ENCODE measurements at regions of chr12 and their contacts with region 1.

Region 1: GRCh38 chr12:27821259-27821973 is 41.4 kb upstream of the MANSC4 start:
- DNase-seq: no peak
- H3K4me3 ChIP-seq: no peak overlapping the region
- H3K27ac ChIP-seq: no peak overlapping the region
- H3K4me1 ChIP-seq: peaks cover 0 to 17% (median 14%) of the 10 kb centered on the region in 4 donors
- H3K27me3 ChIP-seq: no peaks in the 10 kb centered on the region
- CTCF ChIP-seq: peak; percentile 56 to 83 (median 68)
- EP300 ChIP-seq: no peak
- POLR2A ChIP-seq: no peak

Region 2: GRCh38 chr12:27667540-27667939 is 153.9 kb before region 1 on chr12:
- intact Hi-C with region 1: no loop called
- DNase-seq: no peak
- H3K4me3 ChIP-seq: no peak overlapping the region
- H3K27ac ChIP-seq: no peak overlapping the region
- H3K4me1 ChIP-seq: no peaks in the 10 kb centered on the region
- H3K27me3 ChIP-seq: no peaks in the 10 kb centered on the region
- CTCF ChIP-seq: no peak
- EP300 ChIP-seq: no peak
- POLR2A ChIP-seq: no peak

Region 3: GRCh38 chr12:27733052-27733656 is 88.3 kb before region 1 on chr12:
- intact Hi-C with region 1: loop called (anchors 2 kb)
- DNase-seq: no peak
- H3K4me3 ChIP-seq: no peak overlapping the region
- H3K27ac ChIP-seq: no peak overlapping the region
- H3K4me1 ChIP-seq: no peaks in the 10 kb centered on the region
- H3K27me3 ChIP-seq: no peaks in the 10 kb centered on the region
- CTCF ChIP-seq: peak; percentile 53 to 75 (median 71)
- EP300 ChIP-seq: no peak
- POLR2A ChIP-seq: no peak

Region 4: DNA sequence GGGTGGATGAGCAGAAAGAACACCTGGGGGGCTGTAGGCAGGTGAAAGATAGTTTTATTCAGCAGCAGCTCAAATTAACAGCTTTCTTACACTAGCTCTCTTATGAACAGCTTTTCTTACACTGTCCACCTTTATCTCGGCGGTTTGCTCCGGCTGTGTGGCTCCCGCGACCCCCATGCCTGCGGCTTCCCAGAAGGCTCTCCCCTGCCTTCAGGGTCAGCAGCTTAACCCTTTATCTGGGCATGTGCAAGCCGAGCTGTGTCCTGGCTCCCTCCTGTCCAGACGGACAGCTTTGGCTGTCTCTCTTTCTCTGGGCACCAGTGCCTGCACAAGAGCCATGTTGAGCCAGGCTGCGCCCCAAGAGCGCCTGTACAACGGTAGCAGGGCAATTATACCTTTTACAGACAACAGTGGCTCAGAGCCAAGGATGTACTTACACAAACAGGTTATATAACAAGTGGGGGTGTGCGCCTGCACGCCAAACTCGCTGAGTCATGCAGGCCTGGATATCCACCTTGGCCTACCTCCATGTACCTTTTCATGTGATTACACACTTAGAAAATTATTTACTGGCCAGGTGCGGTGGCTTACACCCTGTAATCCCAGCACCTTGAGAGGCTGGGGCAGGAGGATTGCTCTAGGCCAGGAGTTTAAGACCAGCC is 69.9 kb before region 1 on chr12:
- intact Hi-C with region 1: loop called (anchors 5 kb)
- DNase-seq: no peak
- H3K4me3 ChIP-seq: no peak overlapping the region
- H3K27ac ChIP-seq: no peak overlapping the region
- H3K4me1 ChIP-seq: peaks cover 0 to 22% (median 18%) of the 10 kb centered on the region in 4 donors
- H3K27me3 ChIP-seq: no peaks in the 10 kb centered on the region
- CTCF ChIP-seq: no peak
- EP300 ChIP-seq: no peak
- POLR2A ChIP-seq: no peak

Region 5: GRCh38 chr12:27779920-27780611 is 41.4 kb before region 1 on chr12 and contains the starts of genes KLHL42 and MANSC4:
- intact Hi-C with region 1: loop called (anchors 5 kb)
- DNase-seq: peak; percentile 89
- H3K4me3 ChIP-seq: peak within 1 kb of the TSS; percentile 69 to 79 (median 71)
- H3K27ac ChIP-seq: peak within 1 kb of the TSS; percentile 86 to 98 (median 94)
- H3K4me1 ChIP-seq: peaks cover 0 to 54% (median 45%) of the 10 kb centered on the region in 4 donors
- H3K27me3 ChIP-seq: no peaks in the 10 kb centered on the region
- CTCF ChIP-seq: no peak
- EP300 ChIP-seq: no peak
- POLR2A ChIP-seq: peak; percentile 16 to 50
- total RNA-seq, gene KLHL42: 60.7 to 78.1 (median 65.6) TPM
- total RNA-seq, gene MANSC4: not detected

Region 6: GRCh38 chr12:27807063-27807703 is 14.2 kb before region 1 on chr12:
- intact Hi-C with region 1: no loop called
- DNase-seq: no peak
- H3K4me3 ChIP-seq: no peak overlapping the region
- H3K27ac ChIP-seq: no peak overlapping the region
- H3K4me1 ChIP-seq: peaks cover 0 to 8% (median 0%) of the 10 kb centered on the region in 4 donors
- H3K27me3 ChIP-seq: no peaks in the 10 kb centered on the region
- CTCF ChIP-seq: no peak
- EP300 ChIP-seq: no peak
- POLR2A ChIP-seq: no peak

Region 7: GRCh38 chr12:27840244-27840999 is 19.0 kb after region 1 on chr12:
- intact Hi-C with region 1: no loop called
- DNase-seq: no peak
- H3K4me3 ChIP-seq: no peak overlapping the region
- H3K27ac ChIP-seq: no peak overlapping the region
- H3K4me1 ChIP-seq: no peaks in the 10 kb centered on the region
- H3K27me3 ChIP-seq: no peaks in the 10 kb centered on the region
- CTCF ChIP-seq: no peak
- EP300 ChIP-seq: peak in 1 of 4 donors; percentile 14
- POLR2A ChIP-seq: no peak

Region 8: GRCh38 chr12:27940756-27941402 is 119.5 kb after region 1 on chr12:
- intact Hi-C with region 1: loop called (anchors 10 kb)
- DNase-seq: peak; percentile 79
- H3K4me3 ChIP-seq: no peak overlapping the region
- H3K27ac ChIP-seq: no peak overlapping the region
- H3K4me1 ChIP-seq: no peaks in the 10 kb centered on the region
- H3K27me3 ChIP-seq: no peaks in the 10 kb centered on the region
- CTCF ChIP-seq: peak; percentile 56 to 80 (median 68)
- EP300 ChIP-seq: no peak
- POLR2A ChIP-seq: no peak